ENCODE measurements at regions of chr2 and their contacts with region 1.

Region 1: DNA sequence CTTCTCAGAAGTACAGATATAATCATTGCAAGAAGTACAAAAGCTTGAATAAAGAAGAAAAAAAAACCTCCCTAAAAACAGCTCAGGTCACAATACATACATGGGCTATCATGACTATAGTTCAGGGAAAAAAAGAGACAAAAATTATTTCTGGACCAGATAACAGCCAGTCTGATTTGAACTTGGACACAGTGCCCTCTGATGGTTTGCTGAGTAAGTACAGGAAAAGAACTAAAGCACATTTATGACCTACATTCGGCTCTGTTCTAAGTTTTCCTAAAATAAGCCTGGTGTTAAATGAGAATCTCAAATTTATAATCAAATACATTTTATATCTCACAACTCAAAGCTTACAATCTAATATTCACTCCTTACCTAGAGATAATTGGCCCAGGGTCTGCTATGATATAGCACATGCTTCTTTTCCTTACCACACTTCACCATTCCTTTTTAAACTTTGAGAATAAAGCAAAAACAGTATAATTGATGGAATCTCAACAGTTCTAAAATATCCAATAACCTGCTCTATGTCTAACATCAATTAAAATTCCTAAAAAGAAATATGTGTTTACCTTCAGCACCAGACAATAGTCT is 81.1 kb downstream of the RAPH1 start:
- DNase-seq: no peak
- H3K4me3 ChIP-seq: no peak overlapping the region
- CTCF ChIP-seq: peak; percentile 62

Region 2: DNA sequence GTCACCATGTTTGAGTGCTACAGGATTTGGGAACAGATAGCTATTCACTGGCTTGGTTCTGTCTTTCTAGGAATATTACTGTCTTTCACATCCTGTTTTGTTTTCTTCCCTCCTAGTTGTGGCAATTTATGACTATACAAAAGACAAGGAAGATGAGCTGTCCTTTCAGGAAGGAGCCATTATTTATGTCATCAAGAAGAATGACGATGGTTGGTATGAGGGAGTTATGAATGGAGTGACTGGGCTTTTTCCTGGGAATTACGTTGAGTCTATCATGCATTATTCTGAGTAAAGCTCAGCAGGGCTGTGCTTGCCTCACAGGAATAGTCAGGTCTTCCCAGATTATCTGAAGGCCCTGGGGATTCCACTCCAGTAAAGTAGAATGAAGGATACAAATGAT is 26.9 kb before region 1 on chr2:
- CTCF ChIA-PET with region 1: interaction called, 11 read pairs
- POLR2A ChIA-PET with region 1: no interaction called
- DNase-seq: no peak
- H3K4me3 ChIP-seq: no peak overlapping the region
- CTCF ChIP-seq: no peak

Region 3: DNA sequence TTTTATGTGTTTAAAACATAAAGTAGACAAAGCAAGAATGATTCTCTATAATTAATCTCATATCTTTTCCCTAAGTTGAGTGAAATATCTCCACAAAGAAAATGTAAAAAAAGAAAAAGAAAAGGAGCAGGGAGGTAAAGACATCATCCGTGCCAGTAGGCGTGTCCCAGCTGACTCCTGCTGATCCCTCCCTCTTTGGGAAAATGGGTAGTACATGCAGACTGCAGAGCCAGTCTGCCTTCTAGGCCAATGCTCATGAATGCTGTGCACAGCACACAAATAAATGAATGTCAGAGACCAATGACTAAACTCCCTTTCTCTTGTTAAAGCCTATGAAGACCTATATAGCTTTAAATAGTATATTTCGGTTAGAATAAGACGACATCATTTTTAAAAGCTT is 16.4 kb after region 1 on chr2:
- CTCF ChIA-PET with region 1: interaction called, 50 read pairs
- POLR2A ChIA-PET with region 1: no interaction called
- DNase-seq: no peak
- H3K4me3 ChIP-seq: no peak overlapping the region
- CTCF ChIP-seq: no peak

Region 4: DNA sequence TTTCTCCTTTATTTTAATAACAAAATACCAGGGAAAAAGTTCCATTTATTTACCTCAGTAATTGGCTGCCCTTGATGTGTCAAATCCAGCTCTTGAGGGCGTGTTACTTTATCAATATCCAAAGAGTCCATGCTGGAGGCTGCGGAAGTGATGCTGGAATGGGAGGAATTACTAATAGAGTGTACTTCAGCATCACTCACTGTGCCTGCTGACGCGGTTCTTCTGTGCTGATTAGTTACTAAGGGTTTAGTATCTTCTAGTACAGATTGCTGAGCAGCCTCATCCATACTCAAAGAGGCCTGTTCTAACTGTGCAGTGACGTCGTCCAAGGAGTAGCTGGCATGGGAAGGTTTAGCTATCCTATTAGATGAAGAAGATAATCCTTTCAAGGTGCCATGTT is 35.6 kb after region 1 on chr2:
- CTCF ChIA-PET with region 1: no interaction called
- POLR2A ChIA-PET with region 1: no interaction called
- DNase-seq: no peak
- H3K4me3 ChIP-seq: no peak overlapping the region
- CTCF ChIP-seq: no peak